Common myeloid progenitor, CD34-positive (primary cell): ENCODE measurements at regions of chr6 and their contacts with region 1.

Region 1: DNA sequence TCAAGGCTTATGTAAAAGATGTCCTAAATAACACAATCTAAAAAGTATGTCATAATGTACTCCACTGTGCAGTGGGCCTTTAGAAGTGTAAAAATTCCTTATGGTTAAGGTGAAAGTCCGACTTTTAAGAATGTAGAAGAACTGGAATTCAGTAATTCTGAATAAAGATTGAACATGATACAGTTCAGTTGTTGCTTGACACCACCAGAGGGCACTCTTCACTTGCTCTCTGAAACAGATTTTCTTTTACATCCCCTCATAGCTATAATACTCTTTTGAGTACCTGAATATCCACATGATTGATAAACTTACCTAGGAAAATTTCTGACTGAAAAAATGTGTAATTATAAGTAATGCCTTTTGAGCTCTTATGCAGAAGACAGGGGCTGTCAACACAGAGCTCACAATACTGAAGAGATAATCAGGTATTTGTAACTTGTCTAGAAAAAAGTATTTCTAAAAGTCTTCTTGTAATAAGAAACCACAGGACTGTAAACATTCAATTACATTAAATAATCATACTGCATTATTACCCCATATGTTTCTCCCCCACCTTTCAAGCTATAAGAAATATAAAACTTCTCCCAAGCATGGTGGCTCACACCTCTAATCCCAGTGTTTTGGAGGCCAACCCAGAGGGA is 92.1 kb downstream of the POPDC3 start:
- DNase-seq: peak; percentile 59 to 77 (median 72)
- H3K4me3 ChIP-seq: no peak overlapping the region
- H3K27ac ChIP-seq: no peak overlapping the region
- H3K4me1 ChIP-seq: no peaks in the 10 kb centered on the region
- H3K27me3 ChIP-seq: peaks cover 0 to 3% (median 0%) of the 10 kb centered on the region in 5 experiments

Region 2: DNA sequence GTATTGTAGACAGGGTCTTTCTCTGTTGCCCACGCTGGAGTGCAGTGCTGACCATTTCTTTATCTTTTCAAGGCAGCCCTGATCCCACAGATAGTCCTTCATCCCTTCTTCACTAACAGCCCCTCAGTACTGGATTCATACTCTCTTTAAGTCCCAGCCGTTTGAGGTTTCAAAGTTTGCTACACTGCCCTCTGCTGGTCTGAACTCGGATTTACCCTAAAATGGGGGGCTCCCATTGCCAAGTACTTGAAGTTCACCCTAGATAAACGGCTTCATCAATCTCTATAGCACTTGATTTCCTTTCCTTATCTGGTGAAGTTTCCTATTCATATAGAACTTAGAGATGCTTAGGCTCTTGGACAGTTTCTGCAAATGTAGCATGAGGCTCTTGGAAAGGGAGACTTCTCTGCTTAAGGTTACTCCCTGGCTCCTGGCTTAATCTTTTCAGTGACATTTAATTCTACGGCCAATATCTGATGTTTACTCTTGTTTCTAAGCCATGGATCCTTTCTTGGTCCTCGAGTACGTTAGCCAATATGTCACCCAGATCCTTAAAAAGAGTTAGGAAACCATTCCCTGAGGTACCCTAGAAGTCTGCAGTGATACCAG is 336.6 kb after region 1 on chr6:
- CTCF ChIA-PET with region 1: interaction called, 23 read pairs
- POLR2A ChIA-PET with region 1: no interaction called
- DNase-seq: peak; percentile 70 to 86 (median 77)
- H3K4me3 ChIP-seq: no peak overlapping the region
- H3K27ac ChIP-seq: no peak overlapping the region
- H3K4me1 ChIP-seq: no peaks in the 10 kb centered on the region
- H3K27me3 ChIP-seq: no peaks in the 10 kb centered on the region